ENCODE measurements at regions of chr3 and their contacts with region 1.

Region 1: GRCh38 chr3:16048435-16049318 is 125.8 kb upstream of the GALNT15 start:
- DNase-seq: peak; percentile 80 to 85
- ATAC-seq: peak; percentile 98 to 99
- H3K4me3 ChIP-seq: no peak overlapping the region
- H3K27ac ChIP-seq: peak overlapping the region; percentile 46 to 62
- H3K4me1 ChIP-seq: peaks cover 12% of the 10 kb centered on the region; the same call in 2 of the 3 replicates
- CTCF ChIP-seq: peak; percentile 96
- EP300 ChIP-seq: no peak
- POLR2A ChIP-seq: no peak
- RAD21 ChIP-seq: peak; percentile 99 to 100

Region 2: GRCh38 chr3:15831930-15832329 is 216.7 kb before region 1 on chr3:
- CTCF ChIA-PET with region 1: no interaction called
- POLR2A ChIA-PET with region 1: no interaction called
- DNase-seq: no peak
- ATAC-seq: no peak; a peak in 1 of 6 replicates
- H3K4me3 ChIP-seq: no peak overlapping the region
- H3K27ac ChIP-seq: no peak overlapping the region
- H3K4me1 ChIP-seq: peaks cover 10% of the 10 kb centered on the region
- CTCF ChIP-seq: no peak
- EP300 ChIP-seq: no peak
- POLR2A ChIP-seq: no peak
- RAD21 ChIP-seq: no peak

Region 3: DNA sequence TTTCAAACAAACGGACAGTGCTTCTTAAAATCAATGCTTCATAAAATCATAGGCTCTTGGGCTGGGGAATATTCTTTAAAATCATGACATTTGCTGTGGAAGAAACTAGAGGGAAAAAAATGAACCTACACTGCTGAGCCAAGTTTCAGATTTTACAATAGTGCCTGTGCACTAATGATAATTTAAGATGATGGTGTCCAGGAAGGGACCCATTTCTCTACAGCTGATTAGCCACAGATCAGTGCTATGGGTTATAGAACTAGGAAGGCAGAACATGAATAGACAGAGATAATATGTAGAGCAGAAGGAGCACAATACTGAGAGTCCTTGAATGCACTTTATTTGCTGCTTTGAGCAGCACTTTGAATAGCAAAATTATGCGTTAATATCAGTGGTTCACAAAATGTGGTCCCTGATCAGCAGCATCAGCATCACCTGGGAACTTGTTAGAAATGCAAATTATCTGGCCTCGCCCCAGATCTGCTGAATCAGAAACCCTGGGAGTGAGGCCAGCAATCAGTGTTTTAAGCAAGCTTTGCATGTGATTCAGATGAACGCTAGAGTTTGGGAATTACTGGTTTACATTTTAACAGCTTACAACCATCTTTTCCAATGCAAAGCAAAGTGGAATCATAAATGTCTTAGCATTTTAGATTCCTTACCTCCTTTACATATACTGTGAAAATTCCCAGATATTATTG is 115.1 kb before region 1 on chr3:
- CTCF ChIA-PET with region 1: no interaction called
- POLR2A ChIA-PET with region 1: no interaction called
- DNase-seq: no peak
- ATAC-seq: no peak
- H3K4me3 ChIP-seq: no peak overlapping the region
- H3K27ac ChIP-seq: no peak overlapping the region
- H3K4me1 ChIP-seq: no peaks in the 10 kb centered on the region
- CTCF ChIP-seq: no peak
- EP300 ChIP-seq: no peak
- POLR2A ChIP-seq: no peak
- RAD21 ChIP-seq: no peak

Region 4: DNA sequence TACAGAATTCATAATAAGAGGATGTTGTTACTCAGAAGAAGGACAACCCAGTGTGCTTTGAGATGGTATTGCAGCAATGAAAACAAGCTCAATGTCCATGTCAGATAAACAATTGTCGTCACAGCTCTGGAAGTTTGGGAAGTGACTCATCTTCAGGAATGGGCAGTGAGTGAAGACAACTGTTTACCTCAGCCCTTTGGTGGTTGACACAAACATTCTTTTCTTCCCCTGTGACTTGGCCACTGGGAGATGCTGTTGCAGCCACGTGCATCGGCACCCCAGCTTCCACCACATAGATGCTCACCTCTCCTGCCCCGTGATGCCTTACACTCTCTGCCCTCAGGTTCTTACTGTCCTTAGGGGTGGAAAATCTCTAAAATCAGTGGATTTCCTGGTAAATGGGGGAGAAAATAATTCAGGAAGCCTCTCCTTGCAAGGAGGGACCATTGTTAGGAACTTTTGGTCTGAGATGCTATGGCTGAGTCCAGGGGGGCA is 11.7 kb after region 1 on chr3:
- CTCF ChIA-PET with region 1: interaction called, 97 read pairs
- POLR2A ChIA-PET with region 1: no interaction called
- DNase-seq: peak; percentile 96 to 98
- ATAC-seq: peak; percentile 92
- H3K4me3 ChIP-seq: no peak overlapping the region
- H3K27ac ChIP-seq: peak overlapping the region; percentile 84 to 90
- H3K4me1 ChIP-seq: peaks cover 55% of the 10 kb centered on the region
- CTCF ChIP-seq: peak; percentile 24; the same call in 1 of the 3 replicates
- EP300 ChIP-seq: peak; percentile 92
- POLR2A ChIP-seq: no peak
- RAD21 ChIP-seq: peak; percentile 55 to 60

Region 5: GRCh38 chr3:16130066-16130465 is 81.4 kb after region 1 on chr3:
- CTCF ChIA-PET with region 1: interaction called, 13 read pairs
- POLR2A ChIA-PET with region 1: no interaction called
- DNase-seq: no peak
- ATAC-seq: peak in 1 of 2 experiments; percentile 44; a peak in 3 of 6 replicates
- H3K4me3 ChIP-seq: no peak overlapping the region
- H3K27ac ChIP-seq: no peak overlapping the region; a peak in 1 of 6 replicates
- H3K4me1 ChIP-seq: peaks cover 5% of the 10 kb centered on the region; the same call in 1 of the 3 replicates
- CTCF ChIP-seq: no peak
- EP300 ChIP-seq: no peak
- POLR2A ChIP-seq: no peak
- RAD21 ChIP-seq: no peak

Region 6: DNA sequence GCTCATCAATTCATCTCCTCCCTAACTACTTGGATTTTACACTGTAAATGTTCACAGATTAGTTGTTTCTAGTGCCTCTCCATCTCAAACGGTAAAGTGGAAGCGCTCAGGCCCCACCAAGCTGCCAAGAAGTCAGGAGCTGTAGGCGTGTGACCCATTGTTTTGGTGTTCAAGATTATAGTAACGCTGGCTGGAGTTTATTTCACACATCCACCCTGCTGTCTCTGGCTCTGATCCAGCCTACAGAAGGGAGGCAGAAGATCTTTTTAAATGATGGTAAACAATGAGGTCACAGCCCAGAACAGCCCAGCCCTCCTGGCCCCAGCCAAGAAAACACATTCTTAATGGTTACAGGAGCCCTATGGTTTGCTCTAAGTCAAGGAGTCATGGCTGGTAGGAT is 100.1 kb after region 1 on chr3:
- CTCF ChIA-PET with region 1: interaction called, 10 read pairs
- POLR2A ChIA-PET with region 1: no interaction called
- DNase-seq: peak in 1 of 2 experiments; percentile 62
- ATAC-seq: peak in 1 of 2 experiments; percentile 46; a peak in 2 of 6 replicates
- H3K4me3 ChIP-seq: no peak overlapping the region
- H3K27ac ChIP-seq: peak overlapping the region; percentile 16 to 34; a peak in 2 of 6 replicates
- H3K4me1 ChIP-seq: peaks cover 32% of the 10 kb centered on the region
- CTCF ChIP-seq: no peak
- EP300 ChIP-seq: no peak
- POLR2A ChIP-seq: no peak
- RAD21 ChIP-seq: no peak

Region 7: DNA sequence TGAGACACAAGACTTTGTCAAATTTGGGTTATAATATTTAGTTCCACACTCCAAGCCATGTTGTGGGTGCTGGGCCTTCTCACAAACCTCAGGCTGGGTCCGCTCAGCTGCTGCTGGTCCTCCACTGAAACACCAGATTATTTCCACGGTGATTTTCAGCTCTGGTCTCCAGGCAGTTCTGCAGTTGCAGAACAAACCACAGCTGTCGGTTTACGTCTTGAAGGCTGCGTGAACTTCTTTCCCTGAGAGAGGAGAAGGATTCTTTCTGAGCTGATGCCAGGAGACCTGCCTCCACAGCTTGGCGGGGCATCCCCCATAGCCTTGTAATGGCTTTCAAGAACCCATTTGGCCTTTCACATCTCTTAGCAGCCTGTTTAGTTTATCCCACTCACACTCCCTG is 142.0 kb after region 1 on chr3:
- CTCF ChIA-PET with region 1: interaction called, 373 read pairs
- POLR2A ChIA-PET with region 1: no interaction called
- DNase-seq: no peak
- ATAC-seq: no peak
- H3K4me3 ChIP-seq: no peak overlapping the region
- H3K27ac ChIP-seq: no peak overlapping the region
- H3K4me1 ChIP-seq: no peaks in the 10 kb centered on the region
- CTCF ChIP-seq: no peak
- EP300 ChIP-seq: no peak
- POLR2A ChIP-seq: no peak
- RAD21 ChIP-seq: no peak

Region 8: DNA sequence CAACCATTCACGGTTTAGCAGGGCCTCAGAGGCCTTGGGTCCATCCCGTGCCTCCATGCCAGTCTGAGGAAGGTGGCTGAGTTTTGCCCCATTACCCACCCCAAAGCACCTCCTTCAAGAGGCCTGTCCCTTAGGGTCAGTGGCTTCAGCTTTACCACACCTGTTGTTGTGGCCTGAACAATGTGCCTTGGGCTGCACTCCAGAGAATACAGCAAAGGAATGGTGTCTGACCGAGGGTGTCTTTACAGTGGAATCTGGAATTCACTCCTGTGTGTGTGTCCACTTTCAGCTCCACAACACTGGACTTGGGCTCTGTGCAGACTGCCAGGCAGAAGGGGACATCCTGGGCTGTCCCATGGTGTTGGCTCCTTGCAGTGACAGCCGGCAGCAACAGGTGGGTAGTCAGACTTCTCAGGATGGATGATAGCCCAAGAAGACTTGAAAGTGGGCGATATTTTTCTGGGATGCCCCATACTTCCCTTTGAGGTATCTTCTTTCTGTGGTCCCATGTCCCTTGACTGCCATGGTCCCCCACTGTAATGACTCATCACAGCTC is 171.0 kb after region 1 on chr3:
- CTCF ChIA-PET with region 1: no interaction called
- POLR2A ChIA-PET with region 1: no interaction called
- DNase-seq: no peak
- ATAC-seq: no peak
- H3K4me3 ChIP-seq: no peak overlapping the region
- H3K27ac ChIP-seq: no peak overlapping the region
- H3K4me1 ChIP-seq: no peaks in the 10 kb centered on the region
- CTCF ChIP-seq: no peak
- EP300 ChIP-seq: no peak
- POLR2A ChIP-seq: no peak
- RAD21 ChIP-seq: no peak

Region 9: DNA sequence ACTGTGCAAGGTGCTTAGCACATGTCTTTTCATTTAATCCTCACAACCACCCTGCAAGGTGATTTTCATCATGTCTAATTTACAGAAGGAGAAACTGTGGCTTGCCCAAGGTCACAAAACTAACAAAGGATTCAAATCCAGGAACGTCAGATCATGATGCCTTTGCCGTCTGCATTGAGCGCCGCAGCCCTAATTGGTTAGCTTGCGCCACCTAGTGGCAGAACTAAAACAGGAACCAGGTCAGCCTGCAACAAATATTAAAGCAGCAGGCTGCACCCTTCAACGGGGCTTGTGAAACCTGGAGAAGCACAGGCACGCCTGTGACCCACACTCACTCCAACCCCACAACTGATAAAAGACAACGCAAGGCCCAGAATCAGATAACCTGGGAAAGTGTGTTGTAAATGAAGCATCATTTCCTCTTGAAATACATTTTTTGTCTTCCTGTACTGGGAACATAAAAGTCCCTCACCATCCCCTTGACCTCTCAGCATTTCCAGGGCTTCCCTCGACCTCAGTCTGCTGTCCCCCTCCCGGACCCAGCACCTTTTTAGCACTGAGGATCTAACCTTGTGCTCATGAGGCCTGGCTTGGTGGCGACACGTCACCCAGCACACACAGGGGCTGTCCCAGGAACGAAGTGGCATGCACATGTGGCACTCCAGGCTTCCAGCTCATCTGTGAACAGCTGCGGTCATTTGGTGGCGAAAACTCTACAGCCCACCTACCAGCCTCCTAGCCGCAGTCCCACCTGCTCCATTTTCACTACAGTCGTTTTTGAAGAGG is 198.8 kb after region 1 on chr3:
- CTCF ChIA-PET with region 1: interaction called, 43 read pairs
- POLR2A ChIA-PET with region 1: no interaction called
- DNase-seq: peak; percentile 68 to 81
- ATAC-seq: peak; percentile 85 to 94
- H3K4me3 ChIP-seq: no peak overlapping the region
- H3K27ac ChIP-seq: peak overlapping the region; percentile 46 to 58; a peak in 4 of 6 replicates
- H3K4me1 ChIP-seq: peaks cover 6% of the 10 kb centered on the region
- CTCF ChIP-seq: peak; percentile 93
- EP300 ChIP-seq: no peak
- POLR2A ChIP-seq: no peak
- RAD21 ChIP-seq: peak; percentile 96 to 97